Endothelial cell of umbilical vein (primary cell): ENCODE measurements at regions of chr17 and their contacts with region 1.

Region 1: DNA sequence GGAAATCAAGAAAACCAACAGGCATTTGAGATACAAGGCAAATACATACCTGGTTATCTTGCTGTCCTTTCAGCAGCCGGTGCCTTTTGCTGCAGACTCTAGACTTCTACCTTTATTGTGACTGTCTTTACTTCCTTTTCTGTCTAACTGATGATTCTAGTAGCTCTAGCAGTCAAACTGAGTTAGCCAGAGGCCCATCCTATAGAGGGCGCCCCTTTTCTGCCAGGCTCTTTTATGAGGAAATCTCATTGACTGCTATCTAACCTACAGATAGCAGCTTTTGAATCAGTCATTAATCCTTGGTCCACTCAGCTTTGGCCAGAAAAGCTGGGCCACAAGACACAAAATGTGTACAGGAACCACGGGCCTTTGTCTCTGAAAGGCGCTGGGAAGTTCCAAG is 87.5 kb upstream of the WSB1 start:
- DNase-seq: no peak
- H3K4me3 ChIP-seq: no peak overlapping the region
- H3K27ac ChIP-seq: no peak overlapping the region
- H3K4me1 ChIP-seq: peaks cover 9% of the 10 kb centered on the region
- H3K27me3 ChIP-seq: no peaks in the 10 kb centered on the region
- CTCF ChIP-seq: peak in 1 of 2 donors; percentile 7
- POLR2A ChIP-seq: no peak

Region 2: DNA sequence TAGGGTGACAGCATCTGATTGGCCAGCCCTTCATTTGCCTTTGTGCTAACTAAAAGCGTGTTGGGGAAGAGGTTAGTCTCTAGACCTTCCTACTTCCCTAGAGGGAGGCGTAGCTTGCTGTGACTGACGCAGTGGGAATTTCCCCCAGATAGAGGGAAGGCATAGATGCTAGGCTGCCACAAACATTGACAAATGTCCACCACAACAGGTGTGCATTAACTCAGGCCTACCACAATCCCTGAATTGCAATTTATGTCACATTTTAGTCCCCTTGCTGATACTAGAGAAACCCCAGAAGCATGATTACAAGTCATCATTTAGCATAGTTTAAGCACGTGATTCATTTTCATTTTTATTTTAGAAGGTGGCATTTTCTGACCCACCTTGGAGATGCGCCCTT is 11.2 kb after region 1 on chr17:
- CTCF ChIA-PET with region 1: interaction called, 11 read pairs
- POLR2A ChIA-PET with region 1: no interaction called
- dilution Hi-C with region 1: no loop called
- intact Hi-C with region 1: no loop called
- DNase-seq: no peak
- H3K4me3 ChIP-seq: no peak overlapping the region
- H3K27ac ChIP-seq: no peak overlapping the region
- H3K4me1 ChIP-seq: no peaks in the 10 kb centered on the region
- H3K27me3 ChIP-seq: no peaks in the 10 kb centered on the region
- CTCF ChIP-seq: no peak
- POLR2A ChIP-seq: no peak